SK-N-SH (cell line): ENCODE measurements at regions of chr18 and their contacts with region 1.

Region 1: DNA sequence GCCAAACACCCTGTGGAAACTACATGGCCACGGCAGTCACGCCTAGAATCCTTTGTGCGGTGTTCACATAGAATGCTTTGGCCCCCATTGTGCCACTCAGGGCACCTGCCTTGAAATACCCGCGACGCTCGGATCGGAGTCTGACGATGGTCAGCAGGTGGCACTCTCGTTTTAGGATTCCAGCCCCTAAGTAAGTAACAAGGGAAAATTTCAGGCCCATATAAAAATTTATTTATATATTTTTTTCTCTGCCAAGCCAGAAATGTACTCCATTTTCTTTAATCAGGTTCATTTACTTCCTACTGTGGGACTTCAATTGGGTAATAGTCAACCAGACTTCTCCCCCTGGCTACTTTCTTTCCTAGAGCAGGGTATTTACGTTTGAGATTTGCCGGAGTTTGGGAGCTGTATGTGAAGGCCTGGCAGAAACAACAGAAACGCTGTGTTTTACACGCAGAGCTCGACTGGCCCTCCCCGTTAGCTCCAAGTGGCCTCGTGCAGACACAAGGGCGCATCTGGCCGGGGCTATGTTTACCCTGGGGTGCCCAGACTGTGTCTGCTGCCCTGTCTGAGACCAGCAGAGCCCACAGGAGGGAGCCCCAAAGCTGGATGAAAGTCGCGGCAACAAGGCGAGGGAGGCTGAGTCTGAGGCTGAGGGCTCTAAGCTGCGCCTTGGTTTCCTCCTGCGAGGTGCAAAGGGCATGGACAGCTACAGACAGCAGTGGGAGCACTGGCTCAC is 41.6 kb downstream of the LRRC30 start:
- DNase-seq: peak; percentile 71
- H3K4me3 ChIP-seq: no peak overlapping the region; a peak in 1 of 4 replicates
- H3K27ac ChIP-seq: peak overlapping the region in 1 of 2 experiments; percentile 31; a peak in 1 of 4 replicates
- H3K4me1 ChIP-seq: peaks cover 0 to 7% of the 10 kb centered on the region in 2 experiments; a peak in 1 of 4 replicates
- H3K27me3 ChIP-seq: no peaks in the 10 kb centered on the region
- CTCF ChIP-seq: no peak
- EP300 ChIP-seq: no peak
- RAD21 ChIP-seq: peak; percentile 86

Region 2: DNA sequence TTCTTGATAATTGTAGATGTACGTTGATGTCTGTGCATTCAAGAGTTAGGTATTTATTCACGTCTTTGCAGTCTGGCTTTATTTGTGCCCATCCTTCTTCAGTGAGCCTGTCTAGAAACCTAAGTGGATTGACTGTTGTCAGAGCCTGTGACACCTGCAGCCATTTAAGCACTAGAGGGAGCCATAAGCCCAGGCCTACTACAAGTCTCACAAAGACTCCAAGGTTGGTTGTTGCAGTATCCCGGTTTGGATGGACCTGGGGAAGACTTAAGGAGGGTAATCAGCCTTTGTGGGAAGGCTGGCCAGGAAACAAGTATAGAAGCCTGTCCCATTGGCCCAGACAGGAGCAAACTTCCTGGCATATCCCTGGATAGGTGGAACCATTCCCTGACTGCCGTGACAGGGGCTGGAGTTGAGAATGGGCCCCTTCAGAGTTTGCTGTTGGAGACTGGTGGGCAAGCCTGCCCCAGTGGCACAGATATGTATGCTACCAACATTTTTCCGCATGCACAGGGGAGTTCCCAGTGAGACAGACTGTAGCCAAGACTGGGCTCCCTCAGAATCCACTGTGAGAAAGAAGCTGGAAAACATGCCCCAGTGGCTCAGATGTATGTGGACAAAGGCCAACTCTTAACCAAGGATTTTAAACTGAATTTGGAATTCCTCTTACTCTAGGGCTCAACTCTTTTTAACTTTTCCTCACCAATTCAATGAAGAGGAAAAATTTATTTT is 50.9 kb before region 1 on chr18:
- CTCF ChIA-PET with region 1: interaction called, 20 read pairs
- POLR2A ChIA-PET with region 1: no interaction called
- DNase-seq: peak; percentile 64
- H3K4me3 ChIP-seq: peak overlapping the region in 1 of 2 experiments; percentile 43; a peak in 1 of 4 replicates
- H3K27ac ChIP-seq: no peak overlapping the region
- H3K4me1 ChIP-seq: no peaks in the 10 kb centered on the region; a peak in 1 of 4 replicates
- H3K27me3 ChIP-seq: no peaks in the 10 kb centered on the region
- CTCF ChIP-seq: peak; percentile 56
- EP300 ChIP-seq: no peak
- RAD21 ChIP-seq: peak; percentile 96

Region 3: DNA sequence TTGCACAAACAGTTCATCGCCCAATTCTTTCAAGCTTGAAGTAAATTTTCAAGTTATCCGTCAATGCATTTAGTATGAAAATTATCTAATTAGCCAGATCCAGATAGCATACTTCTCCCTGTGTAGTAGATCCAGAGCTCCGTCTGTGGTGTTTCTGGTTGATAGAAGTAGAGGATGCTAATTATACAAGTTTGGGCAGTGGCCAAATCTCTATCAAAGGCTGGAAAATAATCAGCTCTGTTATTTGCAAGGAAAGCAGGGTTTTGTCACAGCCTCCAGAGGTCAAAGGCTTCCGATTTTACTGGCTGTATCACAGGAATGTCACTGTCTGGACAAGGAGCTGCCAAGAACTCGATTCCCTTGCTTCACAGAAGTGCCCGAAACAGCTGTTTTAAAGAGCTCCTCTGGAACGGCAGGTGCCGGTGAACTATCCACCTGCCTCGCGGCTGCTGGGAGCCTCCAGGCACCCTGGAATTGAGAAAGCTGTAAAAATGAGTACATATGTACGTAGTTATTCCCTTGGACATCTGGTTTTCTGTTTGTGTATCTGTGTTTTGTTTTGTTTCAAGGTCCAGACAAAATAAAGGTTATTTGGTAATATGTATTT is 12.9 kb before region 1 on chr18:
- CTCF ChIA-PET with region 1: interaction called, 20 read pairs
- POLR2A ChIA-PET with region 1: no interaction called
- DNase-seq: peak; percentile 70
- H3K4me3 ChIP-seq: no peak overlapping the region
- H3K27ac ChIP-seq: peak overlapping the region in 1 of 2 experiments; percentile 73; a peak in 2 of 4 replicates
- H3K4me1 ChIP-seq: peaks cover 0 to 18% of the 10 kb centered on the region in 2 experiments; a peak in 2 of 4 replicates
- H3K27me3 ChIP-seq: no peaks in the 10 kb centered on the region
- CTCF ChIP-seq: no peak
- EP300 ChIP-seq: peak in 1 of 2 experiments; percentile 86; a peak in 2 of 4 replicates
- RAD21 ChIP-seq: peak; percentile 14; the same call in 1 of the 2 replicates

Region 4: GRCh38 chr18:7288544-7288943 is 16.1 kb after region 1 on chr18:
- CTCF ChIA-PET with region 1: interaction called, 19 read pairs
- POLR2A ChIA-PET with region 1: no interaction called
- DNase-seq: no peak
- H3K4me3 ChIP-seq: no peak overlapping the region
- H3K27ac ChIP-seq: no peak overlapping the region
- H3K4me1 ChIP-seq: no peaks in the 10 kb centered on the region
- H3K27me3 ChIP-seq: no peaks in the 10 kb centered on the region
- CTCF ChIP-seq: no peak
- EP300 ChIP-seq: no peak
- RAD21 ChIP-seq: no peak

Region 5: GRCh38 chr18:7592305-7593071 is 320.0 kb after region 1 on chr18:
- CTCF ChIA-PET with region 1: interaction called, 15 read pairs
- POLR2A ChIA-PET with region 1: no interaction called
- DNase-seq: peak; percentile 36
- H3K4me3 ChIP-seq: no peak overlapping the region
- H3K27ac ChIP-seq: peak overlapping the region in 1 of 2 experiments; percentile 95; a peak in 2 of 4 replicates
- H3K4me1 ChIP-seq: peaks cover 0 to 27% of the 10 kb centered on the region in 2 experiments; a peak in 2 of 4 replicates
- H3K27me3 ChIP-seq: no peaks in the 10 kb centered on the region
- CTCF ChIP-seq: no peak
- EP300 ChIP-seq: no peak
- RAD21 ChIP-seq: peak; percentile 44